ENCODE measurements at regions of chr16 and their contacts with region 1.

Region 1: GRCh38 chr16:79535130-79535529 is 65.4 kb downstream of the MAF start:
- DNase-seq: no peak
- ATAC-seq: no peak
- H3K4me3 ChIP-seq: no peak overlapping the region
- H3K27ac ChIP-seq: peak overlapping the region in 2 of 4 donors; percentile 84 to 86
- H3K4me1 ChIP-seq: peaks cover 17 to 19% of the 10 kb centered on the region in 2 donors
- H3K27me3 ChIP-seq: no peaks in the 10 kb centered on the region
- CTCF ChIP-seq: no peak
- POLR2A ChIP-seq: no peak

Region 2: DNA sequence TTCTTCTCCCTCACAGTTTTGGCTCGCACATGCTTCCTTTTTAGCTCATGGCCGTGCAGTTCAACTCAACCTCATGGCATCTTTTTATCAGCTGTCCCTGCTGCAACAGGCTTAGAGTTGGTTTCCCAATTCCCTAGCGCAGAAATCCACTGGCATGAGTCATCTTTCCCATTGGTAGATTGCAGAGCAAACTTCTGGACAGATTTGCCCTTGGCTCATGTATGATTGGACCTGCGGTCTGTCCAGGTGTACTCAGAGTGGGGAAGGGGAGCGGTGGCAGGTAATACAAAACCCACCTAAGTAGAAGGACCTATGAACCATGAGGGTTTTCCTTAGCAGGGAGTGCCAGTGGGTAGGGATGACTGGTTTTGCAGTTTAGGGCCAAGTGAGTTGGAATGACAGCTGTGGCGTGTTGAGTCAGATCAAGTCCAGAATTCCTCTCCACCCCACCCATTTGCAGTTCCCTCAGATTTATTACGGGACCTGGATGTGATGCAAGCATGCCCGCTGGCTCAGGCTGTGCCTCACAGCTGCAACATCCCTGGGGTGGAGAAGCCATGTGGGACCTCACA is 851.0 kb before region 1 on chr16:
- in situ Hi-C with region 1: no loop called
- intact Hi-C with region 1: loop called (anchors 10 kb)
- DNase-seq: peak; percentile 78 to 88
- ATAC-seq: peak; percentile 93 to 97
- H3K4me3 ChIP-seq: no peak overlapping the region
- H3K27ac ChIP-seq: peak overlapping the region; percentile 68 to 73 (median 70)
- H3K4me1 ChIP-seq: peaks cover 6 to 23% of the 10 kb centered on the region in 2 donors
- H3K27me3 ChIP-seq: no peaks in the 10 kb centered on the region
- CTCF ChIP-seq: no peak
- POLR2A ChIP-seq: no peak

Region 3: GRCh38 chr16:79348521-79349306 is 186.4 kb before region 1 on chr16:
- in situ Hi-C with region 1: no loop called
- intact Hi-C with region 1: no loop called
- DNase-seq: no peak
- ATAC-seq: no peak
- H3K4me3 ChIP-seq: no peak overlapping the region
- H3K27ac ChIP-seq: no peak overlapping the region
- H3K4me1 ChIP-seq: peaks cover 0 to 19% of the 10 kb centered on the region in 2 donors
- H3K27me3 ChIP-seq: no peaks in the 10 kb centered on the region
- CTCF ChIP-seq: no peak
- POLR2A ChIP-seq: no peak

Region 4: GRCh38 chr16:79437764-79438751 is 97.1 kb before region 1 on chr16:
- in situ Hi-C with region 1: no loop called
- intact Hi-C with region 1: loop called (anchors 5 kb)
- DNase-seq: peak; percentile 30 to 75
- ATAC-seq: peak; percentile 87 to 96
- H3K4me3 ChIP-seq: peak overlapping the region; percentile 26 to 43 (median 36)
- H3K27ac ChIP-seq: peak overlapping the region; percentile 76 to 87 (median 82)
- H3K4me1 ChIP-seq: peaks cover 11 to 25% of the 10 kb centered on the region in 2 donors
- H3K27me3 ChIP-seq: no peaks in the 10 kb centered on the region
- CTCF ChIP-seq: no peak
- POLR2A ChIP-seq: no peak

Region 5: GRCh38 chr16:79469999-79470398 is 65.1 kb before region 1 on chr16:
- in situ Hi-C with region 1: no loop called
- intact Hi-C with region 1: loop called (anchors 5 kb)
- DNase-seq: peak; percentile 12 to 39
- ATAC-seq: no peak
- H3K4me3 ChIP-seq: no peak overlapping the region
- H3K27ac ChIP-seq: no peak overlapping the region
- H3K4me1 ChIP-seq: peaks cover 18 to 22% of the 10 kb centered on the region in 2 donors
- H3K27me3 ChIP-seq: no peaks in the 10 kb centered on the region
- CTCF ChIP-seq: no peak
- POLR2A ChIP-seq: no peak

Region 6: DNA sequence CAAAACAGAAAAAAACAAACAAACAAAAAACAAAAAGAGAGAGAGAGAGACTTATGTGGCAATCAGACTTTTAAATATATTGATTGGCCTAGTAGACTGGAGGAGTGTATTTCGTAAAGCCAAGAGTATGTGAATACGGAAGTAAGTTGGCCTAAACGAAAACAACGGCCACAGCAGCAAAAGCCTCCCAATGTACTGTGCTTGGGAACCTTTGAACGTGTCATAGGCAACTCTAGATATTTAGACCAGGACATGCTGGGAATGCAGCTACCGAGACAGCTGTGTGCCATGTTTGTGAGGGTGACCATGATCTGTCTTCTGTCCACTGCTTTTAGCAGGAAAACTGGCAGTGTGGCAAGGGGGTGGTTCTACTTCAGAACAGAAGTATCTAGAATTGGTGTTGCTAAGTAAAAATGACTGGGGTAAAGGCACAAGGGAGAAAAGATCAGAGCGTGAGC is 58.0 kb after region 1 on chr16:
- in situ Hi-C with region 1: loop called in 1 of 4 experiments (anchors 10 kb)
- intact Hi-C with region 1: loop called (anchors 2 kb)
- DNase-seq: peak in 1 of 2 donors; percentile 47
- ATAC-seq: peak; percentile 46 to 49
- H3K4me3 ChIP-seq: peak overlapping the region; percentile 62 to 85 (median 72)
- H3K27ac ChIP-seq: peak overlapping the region; percentile 89 to 95 (median 92)
- H3K4me1 ChIP-seq: peaks cover 38 to 47% of the 10 kb centered on the region in 2 donors
- H3K27me3 ChIP-seq: no peaks in the 10 kb centered on the region
- CTCF ChIP-seq: no peak
- POLR2A ChIP-seq: peak in 1 of 2 donors; percentile 24

Region 7: GRCh38 chr16:79640513-79641355 is 105.6 kb after region 1 on chr16:
- in situ Hi-C with region 1: no loop called
- intact Hi-C with region 1: no loop called
- DNase-seq: no peak
- ATAC-seq: no peak
- H3K4me3 ChIP-seq: no peak overlapping the region
- H3K27ac ChIP-seq: no peak overlapping the region
- H3K4me1 ChIP-seq: peaks cover 0 to 5% of the 10 kb centered on the region in 2 donors
- H3K27me3 ChIP-seq: peaks cover 0 to 4% (median 0%) of the 10 kb centered on the region in 3 donors
- CTCF ChIP-seq: no peak
- POLR2A ChIP-seq: no peak

Measured in gastrocnemius medialis (tissue), 4 donors.